ENCODE measurements at regions of chr2 and their contacts with region 1.

Region 1: GRCh38 chr2:223837287-223838061 is at the start of gene AP1S3:
- DNase-seq: peak; percentile 88 to 97
- H3K4me3 ChIP-seq: peak within 1 kb of the TSS; percentile 89
- H3K27ac ChIP-seq: peak within 1 kb of the TSS; percentile 80
- H3K4me1 ChIP-seq: peaks cover 33% of the 10 kb centered on the region
- H3K27me3 ChIP-seq: no peaks in the 10 kb centered on the region
- CTCF ChIP-seq: no peak; the same call in 1 of the 2 replicates
- total RNA-seq, gene AP1S3: 61.3 and 73.3 TPM in 2 replicates

Region 2: DNA sequence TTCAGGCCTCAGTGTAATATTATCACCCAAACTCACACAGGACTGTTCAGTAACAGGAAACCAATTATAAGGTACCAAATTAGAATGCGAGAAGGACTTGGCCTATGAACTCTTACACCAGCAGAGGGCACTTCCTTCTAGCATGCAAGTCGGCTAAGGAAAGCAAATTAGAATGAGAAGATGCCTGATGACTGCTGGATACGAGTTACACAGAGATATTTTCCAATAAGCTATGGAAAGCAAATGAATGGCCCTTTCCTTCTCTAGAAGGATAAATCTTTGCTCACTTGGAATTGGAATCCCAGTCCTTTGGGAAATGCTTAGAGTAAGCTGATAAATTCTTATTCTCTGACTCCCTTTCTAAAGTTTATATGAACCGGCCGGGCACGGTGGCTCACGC is 109.9 kb before region 1 on chr2:
- CTCF ChIA-PET with region 1: no interaction called
- POLR2A ChIA-PET with region 1: no interaction called
- intact Hi-C with region 1: loop called (anchors 2 kb)
- DNase-seq: peak; percentile 39 to 73
- H3K4me3 ChIP-seq: no peak overlapping the region
- H3K27ac ChIP-seq: no peak overlapping the region
- H3K4me1 ChIP-seq: peaks cover 19% of the 10 kb centered on the region
- H3K27me3 ChIP-seq: no peaks in the 10 kb centered on the region
- CTCF ChIP-seq: peak; percentile 73

Region 3: DNA sequence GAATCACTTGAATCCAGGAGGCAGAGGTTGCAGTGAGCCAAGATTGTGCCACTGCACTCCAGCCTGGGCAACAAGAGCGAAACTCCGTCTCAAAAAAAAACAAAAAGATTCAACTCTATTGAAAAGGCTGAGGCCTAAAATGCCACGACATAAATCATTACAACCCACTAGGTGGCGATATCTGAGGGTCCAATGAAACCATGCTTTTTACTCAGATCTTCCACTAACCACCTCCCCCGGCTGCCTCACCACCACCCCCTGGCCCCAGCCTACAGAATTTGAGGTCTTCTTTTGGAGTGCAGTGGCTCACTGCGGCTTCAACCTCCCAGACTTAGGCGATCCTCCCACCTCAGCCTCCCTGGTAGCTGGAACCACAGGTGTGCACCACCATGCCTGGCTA is 57.6 kb before region 1 on chr2:
- CTCF ChIA-PET with region 1: interaction called, 4 read pairs
- POLR2A ChIA-PET with region 1: no interaction called
- intact Hi-C with region 1: loop called (anchors 1 kb)
- DNase-seq: peak; percentile 58 to 69
- H3K4me3 ChIP-seq: no peak overlapping the region
- H3K27ac ChIP-seq: no peak overlapping the region
- H3K4me1 ChIP-seq: no peaks in the 10 kb centered on the region
- H3K27me3 ChIP-seq: no peaks in the 10 kb centered on the region
- CTCF ChIP-seq: peak; percentile 84

Region 4: DNA sequence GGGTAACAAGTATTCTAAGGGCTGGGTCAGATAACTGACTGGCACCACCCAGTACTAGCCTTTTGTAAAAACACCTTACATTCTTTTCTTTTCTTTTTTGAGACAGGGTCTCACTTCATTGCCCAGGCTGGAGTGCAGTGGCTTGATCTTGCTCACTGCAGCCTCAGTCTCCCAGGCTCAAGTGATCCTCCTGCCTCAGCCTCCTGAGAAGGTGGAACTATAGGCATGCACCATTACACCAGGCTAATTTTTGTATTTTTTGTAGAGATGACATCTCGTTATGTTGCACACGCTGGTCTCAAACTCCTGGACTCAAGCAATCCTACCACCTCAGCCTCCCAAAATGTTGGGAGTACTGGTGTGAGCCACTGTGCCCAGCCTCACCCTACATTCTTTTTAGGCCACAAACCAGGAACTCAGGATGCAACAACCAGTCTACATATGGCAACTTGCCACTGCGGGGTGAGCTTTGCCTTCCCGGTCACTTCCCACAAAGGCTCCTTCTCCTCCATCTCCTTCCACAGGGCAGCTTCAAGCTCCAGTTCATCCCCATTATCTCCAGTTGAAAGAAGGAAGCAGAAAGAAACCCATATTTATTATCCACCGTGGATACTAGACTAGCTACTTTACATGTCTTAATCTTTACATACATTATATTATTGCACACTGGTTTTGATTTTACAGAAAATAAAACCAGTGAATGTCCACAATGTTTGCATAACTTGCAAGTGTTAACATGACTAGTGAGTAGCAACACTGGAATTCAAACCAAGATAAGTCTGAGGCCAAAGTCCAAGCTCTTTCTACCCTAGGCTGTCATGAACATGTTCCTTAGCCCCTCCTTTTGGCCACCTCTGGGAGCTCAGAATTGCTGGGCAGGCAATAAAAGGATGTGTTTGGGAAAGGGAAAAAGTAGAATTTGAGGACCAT is 23.6 kb after region 1 on chr2:
- CTCF ChIA-PET with region 1: interaction called, 4 read pairs
- POLR2A ChIA-PET with region 1: interaction called, 4 read pairs
- intact Hi-C with region 1: loop called (anchors 1 kb)
- DNase-seq: peak; percentile 92 to 98
- H3K4me3 ChIP-seq: no peak overlapping the region; the same call in 1 of the 2 replicates
- H3K27ac ChIP-seq: peak overlapping the region; percentile 85
- H3K4me1 ChIP-seq: peaks cover 51% of the 10 kb centered on the region
- H3K27me3 ChIP-seq: no peaks in the 10 kb centered on the region
- CTCF ChIP-seq: peak; percentile 67

Region 5: GRCh38 chr2:223896833-223897311 is 59.4 kb after region 1 on chr2:
- CTCF ChIA-PET with region 1: no interaction called
- POLR2A ChIA-PET with region 1: no interaction called
- intact Hi-C with region 1: no loop called
- DNase-seq: no peak
- H3K4me3 ChIP-seq: no peak overlapping the region
- H3K27ac ChIP-seq: no peak overlapping the region
- H3K4me1 ChIP-seq: peaks cover 9% of the 10 kb centered on the region; the same call in 1 of the 2 replicates
- H3K27me3 ChIP-seq: no peaks in the 10 kb centered on the region
- CTCF ChIP-seq: no peak

Region 6: DNA sequence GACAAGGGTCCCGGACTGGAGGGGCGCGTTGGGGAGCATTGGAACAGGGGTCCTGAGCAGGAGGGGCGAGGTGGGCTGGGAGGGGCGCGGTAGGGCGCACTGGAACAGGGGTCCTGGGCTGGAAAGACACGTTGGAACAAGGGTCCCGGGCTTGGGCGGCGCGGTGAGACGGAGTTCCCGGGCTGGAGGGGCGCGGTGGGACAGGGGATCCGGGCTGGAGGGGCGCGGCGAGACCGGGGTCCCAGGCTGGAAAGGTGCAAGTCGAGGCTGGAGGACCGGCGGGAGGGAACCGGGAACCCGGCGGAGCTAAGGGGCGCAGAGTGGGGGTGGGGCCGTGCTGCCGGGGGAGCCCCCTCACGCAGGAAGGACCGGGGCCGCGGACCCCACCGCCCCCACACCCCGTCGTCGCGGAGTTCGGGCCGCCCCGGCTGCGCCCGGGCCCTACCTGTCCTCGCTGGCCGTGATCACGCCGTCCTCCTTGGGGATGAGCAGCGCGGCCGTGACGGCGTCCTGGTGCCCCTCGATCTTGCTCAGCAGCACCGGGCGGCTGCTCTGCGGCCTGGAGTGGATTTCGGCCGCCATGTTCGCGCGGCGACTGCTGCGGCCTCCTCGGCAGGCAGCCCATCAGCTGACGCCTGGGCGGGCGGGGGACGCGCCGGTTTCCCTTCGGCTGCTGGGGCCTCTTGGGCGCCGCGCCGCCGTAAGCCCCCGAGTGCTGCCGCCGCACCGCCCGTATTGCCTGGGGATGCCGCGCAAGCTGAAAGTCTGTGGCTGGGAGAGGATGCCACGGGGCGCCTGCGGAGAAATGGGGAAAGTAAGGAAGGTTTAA is 107.4 kb after region 1 on chr2 and contains the start of gene WDFY1:
- CTCF ChIA-PET with region 1: interaction called, 12 read pairs
- POLR2A ChIA-PET with region 1: no interaction called
- intact Hi-C with region 1: loop called (anchors 1 kb)
- DNase-seq: peak; percentile 77 to 94
- H3K4me3 ChIP-seq: peak within 1 kb of the TSS; percentile 74
- H3K27ac ChIP-seq: 0 out of 2 replicates have a peak within 1 kb of the TSS, but pooled peaks have one; percentile 1
- H3K4me1 ChIP-seq: peaks cover 42% of the 10 kb centered on the region
- H3K27me3 ChIP-seq: no peaks in the 10 kb centered on the region
- CTCF ChIP-seq: no peak
- total RNA-seq, gene WDFY1: 81.9 and 84.4 TPM in 2 replicates

Region 7: GRCh38 chr2:223970343-223971128 is 133.1 kb after region 1 on chr2:
- CTCF ChIA-PET with region 1: interaction called, 7 read pairs
- POLR2A ChIA-PET with region 1: interaction called, 21 read pairs
- intact Hi-C with region 1: no loop called
- DNase-seq: peak; percentile 64 to 65
- H3K4me3 ChIP-seq: no peak overlapping the region
- H3K27ac ChIP-seq: no peak overlapping the region
- H3K4me1 ChIP-seq: no peaks in the 10 kb centered on the region
- H3K27me3 ChIP-seq: no peaks in the 10 kb centered on the region
- CTCF ChIP-seq: peak; percentile 100

Region 8: GRCh38 chr2:224479826-224480225 is 642.4 kb after region 1 on chr2:
- CTCF ChIA-PET with region 1: no interaction called
- POLR2A ChIA-PET with region 1: no interaction called
- intact Hi-C with region 1: loop called (anchors 10 kb)
- DNase-seq: no peak
- H3K4me3 ChIP-seq: no peak overlapping the region
- H3K27ac ChIP-seq: no peak overlapping the region
- H3K4me1 ChIP-seq: peaks cover 23% of the 10 kb centered on the region
- H3K27me3 ChIP-seq: no peaks in the 10 kb centered on the region
- CTCF ChIP-seq: no peak

Measured in PC-9 (cell line).